ENCODE measurements at regions of chr1 and their contacts with region 1.

Region 1: DNA sequence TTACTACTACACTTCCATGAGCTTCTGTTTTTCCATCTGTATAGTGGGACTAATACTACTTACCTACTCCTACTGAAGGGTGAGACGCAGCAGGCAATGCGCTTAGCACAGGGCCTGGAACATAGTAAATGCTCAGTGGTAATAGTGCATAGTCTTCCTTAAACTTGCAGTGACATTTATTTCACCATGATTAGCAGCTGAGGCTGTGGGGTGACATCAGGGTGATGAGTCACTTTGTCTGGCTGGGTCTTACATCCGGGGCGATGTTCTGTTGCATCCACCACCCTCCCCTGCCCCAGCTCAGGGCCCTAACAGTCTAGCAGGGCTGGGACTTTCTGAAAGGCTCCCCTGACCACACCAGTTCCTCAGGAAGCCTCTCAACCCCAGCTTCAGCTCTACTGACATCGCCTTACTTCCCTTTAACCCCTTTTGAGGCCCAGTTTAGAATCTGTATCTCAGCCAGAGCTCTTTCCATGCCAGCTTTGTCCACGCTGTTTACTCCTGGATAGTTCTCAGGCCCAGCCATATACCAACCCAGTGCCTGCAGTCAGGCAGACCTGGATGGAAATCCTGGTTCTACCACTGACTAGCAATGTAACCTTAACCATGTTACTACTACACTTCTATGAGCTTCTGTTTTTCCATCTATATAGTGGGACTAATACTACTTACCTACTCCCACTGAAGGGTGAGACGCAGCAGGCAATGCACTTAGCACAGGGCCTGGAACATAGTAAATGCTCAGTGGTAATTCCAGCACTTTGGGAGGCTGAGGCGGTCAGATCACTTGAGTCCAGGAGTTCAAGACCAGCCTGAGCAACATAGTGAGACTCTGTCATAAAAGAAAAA is 66.3 kb downstream of the CD58 start:
- DNase-seq: peak; percentile 67 to 97 (median 81)
- ATAC-seq: peak; percentile 95
- H3K4me3 ChIP-seq: no peak overlapping the region
- H3K4me3 Mint-ChIP-seq: peak overlapping the region; percentile 23
- H3K27ac ChIP-seq: peak overlapping the region; percentile 76
- H3K27ac Mint-ChIP-seq: peak overlapping the region; percentile 89
- H3K4me1 ChIP-seq: peaks cover 64% of the 10 kb centered on the region
- H3K4me1 Mint-ChIP-seq: peaks cover 55% of the 10 kb centered on the region
- H3K27me3 ChIP-seq: no peaks in the 10 kb centered on the region
- H3K27me3 Mint-ChIP-seq: no peaks in the 10 kb centered on the region
- CTCF ChIP-seq: no peak

Region 2: DNA sequence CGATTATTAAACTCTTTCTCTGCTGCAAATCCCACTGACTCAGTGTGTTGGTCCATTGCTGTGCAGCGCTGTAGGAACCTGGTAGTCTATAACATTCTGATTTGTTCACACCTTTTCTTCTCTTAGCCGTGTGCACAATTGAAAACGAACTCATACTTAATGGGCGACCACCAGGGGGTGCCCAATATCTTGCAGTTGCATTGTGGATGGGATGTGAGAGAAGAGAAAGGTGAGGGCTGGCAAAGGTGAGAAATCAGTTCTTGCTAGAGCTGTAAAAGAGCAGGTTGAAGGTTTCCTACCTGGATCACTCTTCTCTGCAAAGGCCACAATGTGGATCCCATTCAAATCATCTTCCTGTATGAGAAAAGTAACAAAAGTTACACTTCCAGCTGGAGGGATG is 787.0 kb before region 1 on chr1:
- CTCF ChIA-PET with region 1: no interaction called
- POLR2A ChIA-PET with region 1: no interaction called
- intact Hi-C with region 1: loop called (anchors 5 kb)
- DNase-seq: peak in 5 of 14 experiments; percentile 9 to 42 (median 31)
- ATAC-seq: no peak
- H3K4me3 ChIP-seq: no peak overlapping the region
- H3K4me3 Mint-ChIP-seq: no peak overlapping the region
- H3K27ac ChIP-seq: no peak overlapping the region
- H3K27ac Mint-ChIP-seq: no peak overlapping the region
- H3K4me1 ChIP-seq: no peaks in the 10 kb centered on the region
- H3K4me1 Mint-ChIP-seq: no peaks in the 10 kb centered on the region
- H3K27me3 ChIP-seq: no peaks in the 10 kb centered on the region
- H3K27me3 Mint-ChIP-seq: peaks cover 4% of the 10 kb centered on the region
- CTCF ChIP-seq: peak; percentile 31

Region 3: DNA sequence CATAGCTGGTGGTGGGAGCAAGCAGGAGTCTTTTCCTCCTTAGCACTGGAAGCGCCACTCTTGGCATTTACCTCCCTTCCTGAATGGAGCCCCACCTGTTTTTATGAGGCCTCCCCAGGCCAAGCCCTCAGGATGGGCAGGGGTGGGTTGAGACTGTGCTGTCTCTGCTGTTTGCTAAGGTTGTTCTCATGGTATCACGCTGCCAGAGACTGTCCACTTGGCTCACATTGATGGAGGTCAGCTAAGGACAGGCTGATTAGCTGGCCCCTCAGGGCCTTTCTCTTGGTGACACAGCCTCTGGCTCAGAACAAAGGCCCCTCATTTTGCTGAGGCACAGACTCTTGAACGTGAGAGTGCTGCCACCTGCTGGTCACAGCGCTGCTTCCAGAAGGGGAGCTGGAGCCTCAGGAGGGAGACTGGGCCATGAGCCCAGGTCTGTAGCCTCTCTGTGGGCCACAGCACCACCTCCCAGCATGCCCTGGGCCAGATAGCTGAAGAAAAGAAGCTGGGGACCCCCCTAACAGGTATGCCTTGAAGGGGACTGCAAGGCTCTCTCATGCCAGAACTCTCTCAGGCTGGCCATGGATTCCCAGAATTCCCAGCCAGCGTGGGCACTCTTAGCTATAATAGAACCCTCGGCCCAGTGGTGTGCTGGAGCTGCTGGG is 19.3 kb before region 1 on chr1:
- CTCF ChIA-PET with region 1: interaction called, 31 read pairs
- POLR2A ChIA-PET with region 1: no interaction called
- intact Hi-C with region 1: no loop called
- DNase-seq: peak; percentile 79 to 95 (median 86)
- ATAC-seq: peak; percentile 90
- H3K4me3 ChIP-seq: no peak overlapping the region
- H3K4me3 Mint-ChIP-seq: no peak overlapping the region
- H3K27ac ChIP-seq: no peak overlapping the region
- H3K27ac Mint-ChIP-seq: no peak overlapping the region
- H3K4me1 ChIP-seq: peaks cover 4% of the 10 kb centered on the region
- H3K4me1 Mint-ChIP-seq: no peaks in the 10 kb centered on the region
- H3K27me3 ChIP-seq: no peaks in the 10 kb centered on the region
- H3K27me3 Mint-ChIP-seq: no peaks in the 10 kb centered on the region
- CTCF ChIP-seq: peak; percentile 99

Region 4: GRCh38 chr1:116514708-116515525 is 10.4 kb after region 1 on chr1:
- CTCF ChIA-PET with region 1: interaction called, 15 read pairs
- POLR2A ChIA-PET with region 1: interaction called, 26 read pairs
- intact Hi-C with region 1: loop called in 1 of 2 experiments (anchors 1 kb)
- DNase-seq: peak in 13 of 14 experiments; percentile 23 to 90 (median 52)
- ATAC-seq: peak; percentile 79
- H3K4me3 ChIP-seq: peak overlapping the region; percentile 1
- H3K4me3 Mint-ChIP-seq: peak overlapping the region; percentile 57
- H3K27ac ChIP-seq: peak overlapping the region; percentile 46 to 80
- H3K27ac Mint-ChIP-seq: peak overlapping the region; percentile 90
- H3K4me1 ChIP-seq: peaks cover 59% of the 10 kb centered on the region
- H3K4me1 Mint-ChIP-seq: peaks cover 65% of the 10 kb centered on the region
- H3K27me3 ChIP-seq: no peaks in the 10 kb centered on the region
- H3K27me3 Mint-ChIP-seq: no peaks in the 10 kb centered on the region
- CTCF ChIP-seq: no peak

Region 5: GRCh38 chr1:116556289-116557006 is 51.9 kb after region 1 on chr1:
- CTCF ChIA-PET with region 1: interaction called, 9 read pairs
- POLR2A ChIA-PET with region 1: interaction called, 5 read pairs
- intact Hi-C with region 1: loop called in 1 of 2 experiments (anchors 5 kb)
- DNase-seq: peak; percentile 28 to 90 (median 52)
- ATAC-seq: peak; percentile 91
- H3K4me3 ChIP-seq: no peak overlapping the region
- H3K4me3 Mint-ChIP-seq: peak overlapping the region; percentile 0
- H3K27ac ChIP-seq: peak overlapping the region in 1 of 2 donors; percentile 57
- H3K27ac Mint-ChIP-seq: peak overlapping the region; percentile 43
- H3K4me1 ChIP-seq: peaks cover 53% of the 10 kb centered on the region
- H3K4me1 Mint-ChIP-seq: peaks cover 64% of the 10 kb centered on the region
- H3K27me3 ChIP-seq: no peaks in the 10 kb centered on the region
- H3K27me3 Mint-ChIP-seq: no peaks in the 10 kb centered on the region
- CTCF ChIP-seq: no peak

Region 6: DNA sequence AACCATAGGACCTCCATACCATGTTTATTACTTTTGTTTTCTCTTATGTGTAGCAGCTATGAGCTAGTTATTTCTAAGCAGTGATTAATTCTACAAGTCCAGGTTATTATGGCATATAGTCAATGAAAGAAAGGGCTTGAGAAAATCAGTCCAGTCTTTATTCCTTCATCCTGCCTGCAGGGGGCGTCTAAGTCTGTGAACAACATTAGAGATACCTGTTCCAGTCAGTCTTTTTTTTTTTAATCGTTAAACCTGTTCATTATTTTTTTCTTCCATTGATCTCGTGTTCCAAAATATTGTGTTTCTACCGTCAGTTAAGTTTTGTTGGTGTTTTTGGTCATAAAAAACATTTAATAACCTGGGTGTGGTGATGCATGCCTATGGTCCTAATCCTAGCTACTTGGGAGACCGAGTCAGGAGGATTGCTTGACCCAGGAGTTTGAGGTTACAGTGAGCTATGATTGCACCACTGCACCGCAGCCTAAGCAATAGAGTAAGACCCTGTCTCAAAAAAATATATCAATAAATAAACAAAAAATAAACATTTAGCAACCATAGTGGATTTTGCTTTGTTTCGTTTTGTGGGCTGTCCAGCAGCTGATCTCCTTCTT is 220.3 kb after region 1 on chr1:
- CTCF ChIA-PET with region 1: no interaction called
- POLR2A ChIA-PET with region 1: no interaction called
- intact Hi-C with region 1: no loop called
- DNase-seq: peak; percentile 56 to 90 (median 72)
- ATAC-seq: no peak
- H3K4me3 ChIP-seq: no peak overlapping the region
- H3K4me3 Mint-ChIP-seq: no peak overlapping the region
- H3K27ac ChIP-seq: no peak overlapping the region
- H3K27ac Mint-ChIP-seq: no peak overlapping the region
- H3K4me1 ChIP-seq: peaks cover 3% of the 10 kb centered on the region
- H3K4me1 Mint-ChIP-seq: peaks cover 22% of the 10 kb centered on the region
- H3K27me3 ChIP-seq: no peaks in the 10 kb centered on the region
- H3K27me3 Mint-ChIP-seq: no peaks in the 10 kb centered on the region
- CTCF ChIP-seq: peak; percentile 97